ENCODE measurements at regions of chr3 and their contacts with region 1.

Region 1: GRCh38 chr3:181700168-181701087 is 11.3 kb upstream of the SOX2 start:
- DNase-seq: peak; percentile 83 to 90
- H3K4me3 ChIP-seq: peak overlapping the region; percentile 31
- H3K4me1 ChIP-seq: peaks cover 51% of the 10 kb centered on the region
- H3K27me3 ChIP-seq: no peaks in the 10 kb centered on the region

Region 2: DNA sequence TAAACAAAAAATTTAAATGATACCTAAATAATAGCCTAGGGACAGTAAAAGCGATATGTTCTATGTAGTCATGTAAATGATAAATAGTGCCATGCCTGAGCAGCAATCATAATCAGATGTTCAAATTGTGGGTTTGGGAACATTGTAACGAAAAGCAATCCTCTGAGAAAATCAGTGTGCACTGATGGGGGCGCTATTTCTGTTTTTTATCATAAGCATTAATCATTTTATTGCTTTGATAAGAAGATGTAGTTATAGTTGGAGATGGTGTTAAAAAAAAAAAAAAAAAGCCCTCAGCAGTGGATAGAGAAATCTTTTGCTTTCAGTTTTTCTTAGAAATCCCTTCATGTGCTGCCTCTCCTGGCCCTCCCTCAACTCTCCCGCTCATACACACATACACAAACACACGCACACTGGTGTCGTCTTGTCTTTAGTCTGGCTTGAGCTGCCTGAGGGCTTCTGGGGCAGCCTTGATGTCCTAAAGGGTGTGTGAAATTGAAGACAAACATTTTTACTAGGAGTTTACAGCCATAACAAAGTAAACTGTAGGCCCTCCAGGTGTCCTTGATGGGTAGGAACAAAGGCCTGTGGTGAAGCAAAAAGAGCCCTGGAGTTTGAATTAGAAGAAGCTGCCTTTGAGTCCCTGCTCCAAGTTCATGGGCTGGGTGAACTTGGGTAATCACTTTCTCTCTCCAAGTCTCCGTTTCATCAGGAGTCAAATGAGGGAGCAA is 439.4 kb after region 1 on chr3:
- in situ Hi-C with region 1: loop called (anchors 25 kb)
- DNase-seq: peak in 1 of 2 experiments; percentile 38
- H3K4me3 ChIP-seq: no peak overlapping the region
- H3K4me1 ChIP-seq: peaks cover 13% of the 10 kb centered on the region
- H3K27me3 ChIP-seq: no peaks in the 10 kb centered on the region

Region 3: GRCh38 chr3:182258538-182259177 is 558.2 kb after region 1 on chr3:
- in situ Hi-C with region 1: loop called (anchors 25 kb)
- DNase-seq: peak; percentile 28 to 71
- H3K4me3 ChIP-seq: no peak overlapping the region
- H3K4me1 ChIP-seq: no peaks in the 10 kb centered on the region
- H3K27me3 ChIP-seq: peaks cover 10% of the 10 kb centered on the region

Measured in HAP-1 (cell line).